ENCODE measurements at regions of chr1 and their contacts with region 1.

Region 1: GRCh38 chr1:174815036-174815435 is 184.7 kb upstream of the CACYBP start:
- DNase-seq: peak; percentile 36
- H3K4me3 ChIP-seq: peak overlapping the region; percentile 37
- H3K27ac ChIP-seq: peak overlapping the region; percentile 77
- H3K4me1 ChIP-seq: peaks cover 87% of the 10 kb centered on the region
- CTCF ChIP-seq: no peak

Region 2: GRCh38 chr1:174276087-174276486 is 538.9 kb before region 1 on chr1:
- CTCF ChIA-PET with region 1: no interaction called
- POLR2A ChIA-PET with region 1: no interaction called
- intact Hi-C with region 1: loop called (anchors 10 kb)
- DNase-seq: peak; percentile 95
- H3K4me3 ChIP-seq: peak overlapping the region; percentile 43
- H3K27ac ChIP-seq: peak overlapping the region; percentile 96
- H3K4me1 ChIP-seq: peaks cover 91% of the 10 kb centered on the region
- CTCF ChIP-seq: no peak

Region 3: DNA sequence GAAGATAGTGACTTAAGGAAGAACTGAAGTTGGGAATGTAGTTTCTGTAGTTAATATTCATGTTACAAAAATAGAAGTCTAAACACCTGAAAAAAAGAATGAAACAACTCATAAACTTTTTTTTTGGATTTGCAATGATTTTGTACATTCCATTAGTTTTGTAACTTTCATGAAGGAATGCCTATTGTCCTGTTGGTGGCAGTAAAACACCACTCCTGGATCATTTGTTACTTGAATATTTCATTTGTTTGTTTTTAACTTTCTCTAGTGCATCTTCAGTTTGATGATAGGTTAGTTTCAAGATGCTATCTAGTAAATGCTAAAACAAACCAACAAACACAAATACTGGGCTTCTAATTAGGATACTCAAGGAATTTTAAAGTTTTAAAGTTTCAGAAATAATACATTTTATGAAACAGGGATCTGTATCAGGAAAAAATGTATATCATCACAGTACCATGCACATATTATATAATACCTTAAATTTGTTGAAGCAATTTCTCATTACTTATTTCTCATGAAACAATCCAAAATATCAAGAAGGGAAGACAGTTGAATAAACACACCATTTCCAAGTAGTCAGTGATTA is 45.0 kb before region 1 on chr1:
- CTCF ChIA-PET with region 1: no interaction called
- POLR2A ChIA-PET with region 1: interaction called, 5 read pairs
- intact Hi-C with region 1: loop called (anchors 5 kb)
- DNase-seq: peak; percentile 80
- H3K4me3 ChIP-seq: no peak overlapping the region
- H3K27ac ChIP-seq: peak overlapping the region; percentile 59
- H3K4me1 ChIP-seq: peaks cover 63% of the 10 kb centered on the region
- CTCF ChIP-seq: peak; percentile 99

Region 4: GRCh38 chr1:174800216-174800851 is 14.7 kb before region 1 on chr1:
- CTCF ChIA-PET with region 1: interaction called, 8 read pairs
- POLR2A ChIA-PET with region 1: interaction called, 17 read pairs
- intact Hi-C with region 1: no loop called
- DNase-seq: peak; percentile 24
- H3K4me3 ChIP-seq: peak overlapping the region; percentile 74
- H3K27ac ChIP-seq: peak overlapping the region; percentile 76
- H3K4me1 ChIP-seq: peaks cover 38% of the 10 kb centered on the region
- CTCF ChIP-seq: no peak

Region 5: GRCh38 chr1:174968750-174969244 is 153.8 kb after region 1 on chr1:
- CTCF ChIA-PET with region 1: interaction called, 3 read pairs
- POLR2A ChIA-PET with region 1: interaction called, 10 read pairs
- intact Hi-C with region 1: no loop called
- DNase-seq: peak; percentile 37
- H3K4me3 ChIP-seq: peak overlapping the region; percentile 0
- H3K27ac ChIP-seq: peak overlapping the region; percentile 93
- H3K4me1 ChIP-seq: peaks cover 67% of the 10 kb centered on the region
- CTCF ChIP-seq: no peak

Measured in OCI-LY7 (cell line).